ENCODE measurements at regions of chrX and their contacts with region 1.

Region 1: DNA sequence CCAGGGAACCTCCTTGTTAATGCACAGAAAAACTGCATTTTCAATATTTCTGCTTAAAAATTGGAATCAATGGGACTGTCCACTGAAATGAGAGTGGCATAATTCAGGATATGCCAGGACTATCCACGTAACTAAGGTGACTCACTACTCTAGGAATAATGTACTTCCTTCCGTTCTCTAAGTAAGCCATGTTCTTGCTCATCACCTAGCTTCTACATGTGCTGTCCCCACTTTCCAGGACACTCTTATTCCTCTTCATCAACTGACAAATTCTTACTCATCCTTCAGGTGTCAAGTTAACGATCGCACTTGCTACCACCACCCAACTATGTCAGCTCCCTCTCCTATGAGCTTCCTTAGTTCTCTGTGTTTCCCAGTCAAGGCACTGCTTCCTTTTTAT is 342.8 kb upstream of the F9 start:
- DNase-seq: no peak
- ATAC-seq: peak; percentile 60 to 82 (median 76)
- H3K4me3 ChIP-seq: no peak overlapping the region
- H3K27ac ChIP-seq: no peak overlapping the region
- H3K4me1 ChIP-seq: peaks cover 3% of the 10 kb centered on the region
- H3K27me3 ChIP-seq: no peaks in the 10 kb centered on the region
- CTCF ChIP-seq: no peak

Region 2: GRCh38 chrX:138917781-138918180 is 270.0 kb before region 1 on chrX:
- intact Hi-C with region 1: loop called in 1 of 2 experiments (anchors 10 kb)
- DNase-seq: no peak
- ATAC-seq: peak in 1 of 4 donors; percentile 26
- H3K4me3 ChIP-seq: no peak overlapping the region
- H3K27ac ChIP-seq: no peak overlapping the region
- H3K4me1 ChIP-seq: no peaks in the 10 kb centered on the region
- H3K27me3 ChIP-seq: no peaks in the 10 kb centered on the region
- CTCF ChIP-seq: no peak

Measured in psoas muscle (tissue), 8 donors.